Caco-2 (cell line): ENCODE measurements at regions of chr1 and their contacts with region 1.

Region 1: DNA sequence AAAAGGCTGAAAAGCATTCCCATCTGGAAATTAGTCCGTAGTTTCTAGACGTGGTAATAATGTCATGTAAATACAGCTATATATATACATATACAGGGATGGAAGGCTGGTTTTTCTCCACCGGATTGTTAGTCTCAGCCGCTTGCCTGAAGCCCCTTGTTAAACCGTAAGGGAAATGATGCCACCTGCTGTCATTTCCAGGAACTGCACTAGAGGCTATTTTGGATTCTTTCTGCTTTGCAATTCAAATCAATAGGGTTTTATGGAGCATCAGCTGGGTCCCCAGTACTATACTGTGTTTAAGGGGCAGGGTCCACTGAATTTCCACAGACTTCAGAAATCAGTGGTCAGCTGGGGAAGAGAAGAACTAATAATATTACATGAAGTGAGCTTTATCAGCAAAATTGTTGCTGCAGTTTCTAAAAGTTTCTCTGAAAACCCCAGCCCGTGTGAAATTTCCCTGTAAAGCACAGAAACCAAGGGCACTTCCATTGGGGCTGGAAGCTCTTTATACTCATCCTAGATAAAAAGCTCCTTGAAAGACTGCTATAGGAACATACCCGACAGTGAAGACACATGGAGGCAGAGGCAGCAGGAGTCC is 33.8 kb upstream of the MPZL1 start:
- DNase-seq: peak; percentile 74 to 80
- H3K4me3 ChIP-seq: no peak overlapping the region
- H3K4me3 Mint-ChIP-seq: no peak overlapping the region
- H3K27ac Mint-ChIP-seq: no peak overlapping the region
- H3K4me1 ChIP-seq: no peaks in the 10 kb centered on the region
- H3K4me1 Mint-ChIP-seq: no peaks in the 10 kb centered on the region
- H3K27me3 ChIP-seq: no peaks in the 10 kb centered on the region
- H3K27me3 Mint-ChIP-seq: no peaks in the 10 kb centered on the region
- CTCF ChIP-seq: peak; percentile 83 to 86

Region 2: GRCh38 chr1:167553136-167554027 is 134.6 kb before region 1 on chr1 and contains the start of gene CREG1:
- CTCF ChIA-PET with region 1: interaction called, 3 read pairs
- POLR2A ChIA-PET with region 1: interaction called, 3 read pairs
- intact Hi-C with region 1: loop called (anchors 1 kb)
- DNase-seq: peak; percentile 95 to 98
- H3K4me3 ChIP-seq: peak within 1 kb of the TSS; percentile 65
- H3K4me3 Mint-ChIP-seq: peak within 1 kb of the TSS; percentile 82
- H3K27ac Mint-ChIP-seq: peak within 1 kb of the TSS; percentile 40
- H3K4me1 ChIP-seq: no peaks in the 10 kb centered on the region; the same call in 1 of the 2 replicates
- H3K4me1 Mint-ChIP-seq: no peaks in the 10 kb centered on the region
- H3K27me3 ChIP-seq: no peaks in the 10 kb centered on the region
- H3K27me3 Mint-ChIP-seq: no peaks in the 10 kb centered on the region
- CTCF ChIP-seq: no peak
- total RNA-seq, gene CREG1: 80.7 and 91.5 TPM in 2 replicates

Region 3: DNA sequence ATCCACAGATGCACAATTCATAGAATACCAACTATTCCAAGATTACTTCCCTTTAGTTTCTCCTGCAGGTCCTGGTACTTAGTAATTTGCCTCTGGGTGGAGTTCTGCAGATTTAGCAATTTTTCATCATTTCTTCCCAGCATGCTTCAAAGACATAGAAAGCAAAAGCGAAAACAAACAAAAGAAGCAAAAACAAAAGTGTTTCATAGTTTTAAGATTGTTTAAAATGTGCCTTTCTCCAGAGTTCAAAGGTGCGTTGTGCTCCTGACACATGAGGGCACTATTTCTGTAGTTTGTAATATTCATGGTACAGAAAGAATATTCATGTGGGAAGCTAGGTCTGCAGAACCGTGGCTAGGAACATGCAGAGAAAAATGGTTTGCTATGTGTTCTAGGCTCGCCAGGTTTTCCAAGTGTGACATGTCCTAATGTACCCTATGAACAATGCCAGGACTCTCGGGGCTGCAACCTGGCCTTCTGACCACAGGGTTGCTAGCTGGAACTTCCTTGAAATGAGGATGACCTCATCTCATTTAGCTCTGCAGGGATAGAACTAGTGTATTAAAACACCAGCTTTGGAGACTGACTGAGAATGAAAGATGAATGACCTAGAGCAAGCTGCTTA is 88.0 kb before region 1 on chr1:
- CTCF ChIA-PET with region 1: interaction called, 46 read pairs
- POLR2A ChIA-PET with region 1: no interaction called
- intact Hi-C with region 1: loop called (anchors 1 kb)
- DNase-seq: peak in 1 of 2 experiments; percentile 8
- H3K4me3 ChIP-seq: no peak overlapping the region
- H3K4me3 Mint-ChIP-seq: no peak overlapping the region
- H3K27ac Mint-ChIP-seq: no peak overlapping the region
- H3K4me1 ChIP-seq: no peaks in the 10 kb centered on the region
- H3K4me1 Mint-ChIP-seq: peaks cover 14% of the 10 kb centered on the region
- H3K27me3 ChIP-seq: no peaks in the 10 kb centered on the region
- H3K27me3 Mint-ChIP-seq: peaks cover 6% of the 10 kb centered on the region
- CTCF ChIP-seq: peak; percentile 42 to 44

Region 4: DNA sequence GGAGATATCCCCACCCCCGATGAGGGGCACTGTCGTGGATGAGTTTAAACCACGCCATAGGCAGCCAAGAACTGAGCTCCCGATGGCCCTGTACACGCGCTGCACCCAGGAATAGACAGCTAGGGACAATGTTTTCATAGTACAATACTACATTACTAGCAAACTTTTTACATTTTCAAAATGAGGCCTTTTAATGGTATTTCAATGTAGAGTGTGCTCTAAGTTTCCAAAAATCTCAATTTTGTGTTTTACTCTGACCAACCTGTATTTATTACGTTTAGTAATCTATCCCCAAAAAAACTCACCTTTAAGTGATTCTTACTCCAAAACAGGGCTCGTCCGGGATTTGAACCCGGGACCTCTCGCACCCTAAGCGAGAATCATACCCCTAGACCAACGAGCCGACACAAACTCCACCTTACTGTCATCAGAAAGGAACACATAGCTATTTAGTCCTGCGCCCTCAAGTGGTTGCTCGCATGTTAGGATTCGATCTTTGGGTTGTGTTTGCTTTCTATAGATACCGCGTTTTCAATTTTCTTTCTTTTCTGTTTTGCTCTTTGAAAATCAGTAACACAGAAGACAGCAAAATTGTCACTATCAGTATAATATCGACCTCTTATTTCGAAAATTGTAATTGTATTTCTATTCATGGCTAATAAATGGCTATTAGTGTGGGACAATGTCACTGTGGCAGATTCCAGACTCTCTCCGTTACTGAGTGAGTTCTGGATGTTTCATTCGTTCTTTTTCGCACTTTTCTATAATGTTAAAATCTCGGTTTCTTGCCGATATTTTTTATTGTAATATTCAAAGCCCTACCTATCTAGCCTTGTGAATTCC is 27.4 kb after region 1 on chr1:
- CTCF ChIA-PET with region 1: no interaction called
- POLR2A ChIA-PET with region 1: no interaction called
- intact Hi-C with region 1: no loop called
- DNase-seq: peak; percentile 84 to 89
- H3K4me3 ChIP-seq: peak overlapping the region; percentile 93
- H3K4me3 Mint-ChIP-seq: peak overlapping the region; percentile 83
- H3K27ac Mint-ChIP-seq: peak overlapping the region; percentile 98
- H3K4me1 ChIP-seq: peaks cover 34% of the 10 kb centered on the region
- H3K4me1 Mint-ChIP-seq: peaks cover 32% of the 10 kb centered on the region
- H3K27me3 ChIP-seq: no peaks in the 10 kb centered on the region
- H3K27me3 Mint-ChIP-seq: peaks cover 8% of the 10 kb centered on the region
- CTCF ChIP-seq: peak; percentile 81 to 89